ENCODE measurements at regions of chr2 and their contacts with region 1.

Region 1: GRCh38 chr2:234981197-234982117 is 29.6 kb downstream of the SH3BP4 start:
- DNase-seq: peak; percentile 77 to 90
- H3K4me3 ChIP-seq: no peak overlapping the region
- H3K4me3 Mint-ChIP-seq: peak overlapping the region; percentile 73
- H3K27ac Mint-ChIP-seq: peak overlapping the region; percentile 91
- H3K4me1 ChIP-seq: peaks cover 39% of the 10 kb centered on the region
- H3K4me1 Mint-ChIP-seq: peaks cover 23% of the 10 kb centered on the region
- H3K27me3 ChIP-seq: no peaks in the 10 kb centered on the region
- H3K27me3 Mint-ChIP-seq: no peaks in the 10 kb centered on the region
- CTCF ChIP-seq: peak in 1 of 2 experiments; percentile 12

Region 2: GRCh38 chr2:234911271-234911670 is 70.2 kb before region 1 on chr2:
- CTCF ChIA-PET with region 1: no interaction called
- POLR2A ChIA-PET with region 1: no interaction called
- intact Hi-C with region 1: no loop called
- DNase-seq: no peak
- H3K4me3 ChIP-seq: no peak overlapping the region
- H3K4me3 Mint-ChIP-seq: no peak overlapping the region
- H3K27ac Mint-ChIP-seq: no peak overlapping the region
- H3K4me1 ChIP-seq: no peaks in the 10 kb centered on the region
- H3K4me1 Mint-ChIP-seq: no peaks in the 10 kb centered on the region
- H3K27me3 ChIP-seq: no peaks in the 10 kb centered on the region
- H3K27me3 Mint-ChIP-seq: no peaks in the 10 kb centered on the region
- CTCF ChIP-seq: no peak

Region 3: GRCh38 chr2:234951664-234952269 is 29.7 kb before region 1 on chr2 and contains the start of gene SH3BP4:
- CTCF ChIA-PET with region 1: interaction called, 5 read pairs
- POLR2A ChIA-PET with region 1: interaction called, 6 read pairs
- intact Hi-C with region 1: loop called (anchors 2 kb)
- DNase-seq: peak; percentile 73 to 78
- H3K4me3 ChIP-seq: peak within 1 kb of the TSS; percentile 63
- H3K4me3 Mint-ChIP-seq: peak within 1 kb of the TSS; percentile 74
- H3K27ac Mint-ChIP-seq: peak within 1 kb of the TSS; percentile 45
- H3K4me1 ChIP-seq: peaks cover 26% of the 10 kb centered on the region
- H3K4me1 Mint-ChIP-seq: peaks cover 12% of the 10 kb centered on the region
- H3K27me3 ChIP-seq: no peaks in the 10 kb centered on the region
- H3K27me3 Mint-ChIP-seq: no peaks in the 10 kb centered on the region
- CTCF ChIP-seq: no peak
- total RNA-seq, gene SH3BP4: 29.1 and 29.9 TPM in 2 replicates

Region 4: GRCh38 chr2:235000426-235001236 is 19.2 kb after region 1 on chr2:
- CTCF ChIA-PET with region 1: no interaction called
- POLR2A ChIA-PET with region 1: interaction called, 3 read pairs
- intact Hi-C with region 1: loop called (anchors 1 kb)
- DNase-seq: peak; percentile 76 to 84
- H3K4me3 ChIP-seq: no peak overlapping the region
- H3K4me3 Mint-ChIP-seq: peak overlapping the region; percentile 57
- H3K27ac Mint-ChIP-seq: peak overlapping the region; percentile 52
- H3K4me1 ChIP-seq: peaks cover 92% of the 10 kb centered on the region
- H3K4me1 Mint-ChIP-seq: peaks cover 22% of the 10 kb centered on the region
- H3K27me3 ChIP-seq: no peaks in the 10 kb centered on the region
- H3K27me3 Mint-ChIP-seq: no peaks in the 10 kb centered on the region
- CTCF ChIP-seq: no peak